ENCODE measurements at regions of chr11 and their contacts with region 1.

Region 1: GRCh38 chr11:125345421-125346178 is 150.5 kb downstream of the FEZ1 start:
- DNase-seq: peak; percentile 84
- H3K4me3 ChIP-seq: no peak overlapping the region
- H3K27ac ChIP-seq: no peak overlapping the region
- H3K4me1 ChIP-seq: peaks cover 0 to 7% of the 10 kb centered on the region in 2 experiments; a peak in 1 of 4 replicates
- H3K27me3 ChIP-seq: no peaks in the 10 kb centered on the region
- CTCF ChIP-seq: peak; percentile 95
- EP300 ChIP-seq: peak in 1 of 2 experiments; percentile 20; a peak in 1 of 4 replicates
- RAD21 ChIP-seq: peak; percentile 69

Region 2: DNA sequence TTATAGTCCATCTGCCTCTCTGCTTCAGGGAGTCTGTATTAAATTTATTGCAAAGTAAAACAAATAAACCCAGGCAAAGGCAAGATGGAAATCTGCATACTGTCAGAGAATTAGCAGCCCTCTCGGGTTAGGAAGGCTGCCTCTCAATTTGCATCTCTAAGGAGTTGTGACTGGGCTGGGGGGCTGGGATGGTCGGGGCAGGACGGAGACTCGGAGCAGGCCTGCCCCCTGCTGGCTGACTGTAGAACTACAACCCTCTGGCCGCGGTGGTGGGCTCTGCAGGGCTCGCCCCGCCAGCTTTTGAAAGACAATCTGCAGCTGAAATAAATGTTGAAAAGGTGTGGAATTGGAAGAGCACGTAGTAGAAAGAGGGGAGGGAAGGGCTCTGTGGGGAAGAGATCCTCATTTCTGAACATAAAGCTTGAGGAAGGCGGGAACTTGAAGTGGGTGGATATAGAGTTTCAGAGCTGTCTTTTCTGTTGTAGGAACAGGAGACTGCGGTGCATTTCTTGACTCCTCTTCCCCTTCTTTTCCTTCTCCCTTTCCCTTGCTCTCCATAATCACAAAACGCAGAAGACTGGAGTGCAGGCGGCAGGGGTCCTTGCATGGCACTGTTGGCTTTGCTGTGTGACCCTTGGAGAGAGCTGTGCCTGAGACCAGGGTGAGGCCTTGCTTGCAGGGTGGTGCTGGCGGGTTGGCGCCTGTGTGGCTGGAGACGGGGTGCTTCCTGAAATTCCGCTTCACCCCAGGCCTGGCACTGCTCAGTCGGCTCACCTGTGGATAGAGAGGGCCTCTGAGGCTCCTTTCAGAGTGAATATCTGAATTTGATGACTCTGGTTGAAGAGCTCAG is 203.7 kb before region 1 on chr11:
- CTCF ChIA-PET with region 1: interaction called, 21 read pairs
- POLR2A ChIA-PET with region 1: no interaction called
- DNase-seq: peak; percentile 87
- H3K4me3 ChIP-seq: no peak overlapping the region; a peak in 1 of 4 replicates
- H3K27ac ChIP-seq: no peak overlapping the region
- H3K4me1 ChIP-seq: peaks cover 0 to 13% of the 10 kb centered on the region in 2 experiments; a peak in 1 of 4 replicates
- H3K27me3 ChIP-seq: no peaks in the 10 kb centered on the region
- CTCF ChIP-seq: peak; percentile 97
- EP300 ChIP-seq: no peak
- RAD21 ChIP-seq: peak; percentile 78

Region 3: DNA sequence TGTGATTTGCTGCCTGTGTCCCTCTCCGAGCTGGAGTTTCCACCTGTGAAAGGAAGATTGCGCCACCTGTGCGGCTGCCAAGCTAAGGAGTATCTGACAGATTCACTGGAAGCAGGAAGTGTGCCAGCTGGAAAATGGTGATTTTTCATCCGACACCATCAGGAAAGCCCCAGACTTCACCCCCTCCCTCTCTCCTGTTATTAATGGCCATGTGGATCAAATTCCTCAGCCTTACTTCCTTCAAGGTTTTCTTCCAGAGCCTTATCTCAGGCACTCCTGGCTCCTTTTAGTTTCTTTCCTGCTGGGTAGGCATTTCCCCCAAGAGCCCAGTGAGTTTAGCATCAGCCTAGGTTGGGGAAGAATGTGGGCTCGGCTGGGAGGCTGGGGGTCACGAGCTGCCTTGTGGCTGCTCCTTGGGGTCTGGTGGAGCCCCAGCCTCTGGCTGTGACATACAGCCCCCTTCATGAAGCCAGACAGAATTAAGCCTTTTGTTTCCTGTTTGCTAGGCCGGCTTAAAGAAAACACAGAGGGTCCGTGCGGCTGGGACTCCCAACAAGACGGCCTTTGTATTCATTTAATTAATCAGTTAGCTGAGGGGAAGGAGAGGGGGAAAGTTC is 144.0 kb before region 1 on chr11:
- CTCF ChIA-PET with region 1: interaction called, 10 read pairs
- POLR2A ChIA-PET with region 1: no interaction called
- DNase-seq: no peak
- H3K4me3 ChIP-seq: no peak overlapping the region
- H3K27ac ChIP-seq: no peak overlapping the region
- H3K4me1 ChIP-seq: peaks cover 0 to 2% of the 10 kb centered on the region in 2 experiments; a peak in 1 of 4 replicates
- H3K27me3 ChIP-seq: no peaks in the 10 kb centered on the region
- CTCF ChIP-seq: no peak
- EP300 ChIP-seq: no peak
- RAD21 ChIP-seq: no peak

Region 4: DNA sequence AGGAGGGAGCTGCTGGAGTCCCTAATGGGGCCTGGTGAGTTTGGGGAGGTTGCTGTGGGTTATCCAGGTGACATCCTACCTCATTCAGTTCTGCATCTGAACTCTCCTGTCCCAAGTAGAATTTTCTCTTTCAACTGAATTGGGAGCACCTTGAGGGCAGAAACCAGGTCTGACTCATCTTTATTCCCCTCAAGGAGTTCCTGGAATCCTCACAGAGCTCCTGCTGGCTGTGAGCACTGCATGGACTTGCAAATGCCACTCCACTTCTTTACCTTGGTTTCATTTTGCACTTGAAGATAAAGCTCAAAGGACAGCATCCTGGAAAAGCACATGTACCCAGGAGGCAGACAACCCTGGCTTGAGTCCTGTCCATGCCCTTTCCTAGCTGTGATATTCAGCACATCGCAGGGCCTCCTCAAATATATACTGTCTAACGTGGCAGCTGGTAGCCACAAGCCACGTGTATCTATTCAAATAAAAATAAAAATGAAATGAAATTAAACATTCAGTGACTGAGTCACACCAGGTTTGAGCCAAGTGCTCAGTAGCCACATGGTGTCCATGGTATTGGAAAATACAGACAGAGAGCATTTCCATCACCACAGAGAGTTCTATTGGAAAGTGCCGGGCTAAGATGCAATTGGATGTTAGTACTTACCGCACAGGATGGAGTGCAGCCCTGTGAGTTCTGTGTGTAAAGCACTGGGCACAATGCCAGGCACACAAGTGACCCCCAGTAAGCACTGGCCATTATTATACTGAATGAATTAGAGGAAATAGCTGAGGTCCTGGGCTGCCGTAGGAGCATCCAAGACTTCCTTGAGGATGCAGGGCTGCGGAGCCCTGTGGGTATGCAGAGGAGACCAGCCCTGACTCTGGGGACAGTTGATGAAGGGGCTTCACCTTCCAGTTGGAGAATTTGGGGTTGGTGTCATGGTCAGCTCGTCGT is 32.1 kb before region 1 on chr11:
- CTCF ChIA-PET with region 1: interaction called, 12 read pairs
- POLR2A ChIA-PET with region 1: no interaction called
- DNase-seq: no peak
- H3K4me3 ChIP-seq: no peak overlapping the region
- H3K27ac ChIP-seq: no peak overlapping the region
- H3K4me1 ChIP-seq: peaks cover 0 to 8% of the 10 kb centered on the region in 2 experiments; a peak in 1 of 4 replicates
- H3K27me3 ChIP-seq: no peaks in the 10 kb centered on the region; the same call in 1 of the 2 replicates
- CTCF ChIP-seq: no peak
- EP300 ChIP-seq: no peak
- RAD21 ChIP-seq: no peak

Region 5: GRCh38 chr11:125364121-125364826 is 18.7 kb after region 1 on chr11:
- CTCF ChIA-PET with region 1: interaction called, 103 read pairs
- POLR2A ChIA-PET with region 1: no interaction called
- DNase-seq: no peak
- H3K4me3 ChIP-seq: no peak overlapping the region
- H3K27ac ChIP-seq: no peak overlapping the region
- H3K4me1 ChIP-seq: 0 out of 4 replicates have a peak, but pooled peaks cover 0 to 6% of the 10 kb centered on the region in 2 experiments
- H3K27me3 ChIP-seq: no peaks in the 10 kb centered on the region
- CTCF ChIP-seq: peak; percentile 14; the same call in 1 of the 2 replicates
- EP300 ChIP-seq: no peak
- RAD21 ChIP-seq: no peak

Region 6: GRCh38 chr11:125468852-125469251 is 123.3 kb after region 1 on chr11:
- CTCF ChIA-PET with region 1: no interaction called
- POLR2A ChIA-PET with region 1: no interaction called
- DNase-seq: no peak
- H3K4me3 ChIP-seq: no peak overlapping the region
- H3K27ac ChIP-seq: no peak overlapping the region
- H3K4me1 ChIP-seq: no peaks in the 10 kb centered on the region; a peak in 1 of 4 replicates
- H3K27me3 ChIP-seq: no peaks in the 10 kb centered on the region
- CTCF ChIP-seq: no peak
- EP300 ChIP-seq: no peak
- RAD21 ChIP-seq: no peak